Left ventricle myocardium inferior (tissue), 1 donor: ENCODE measurements at regions of chr3 and their contacts with region 1.

Region 1: DNA sequence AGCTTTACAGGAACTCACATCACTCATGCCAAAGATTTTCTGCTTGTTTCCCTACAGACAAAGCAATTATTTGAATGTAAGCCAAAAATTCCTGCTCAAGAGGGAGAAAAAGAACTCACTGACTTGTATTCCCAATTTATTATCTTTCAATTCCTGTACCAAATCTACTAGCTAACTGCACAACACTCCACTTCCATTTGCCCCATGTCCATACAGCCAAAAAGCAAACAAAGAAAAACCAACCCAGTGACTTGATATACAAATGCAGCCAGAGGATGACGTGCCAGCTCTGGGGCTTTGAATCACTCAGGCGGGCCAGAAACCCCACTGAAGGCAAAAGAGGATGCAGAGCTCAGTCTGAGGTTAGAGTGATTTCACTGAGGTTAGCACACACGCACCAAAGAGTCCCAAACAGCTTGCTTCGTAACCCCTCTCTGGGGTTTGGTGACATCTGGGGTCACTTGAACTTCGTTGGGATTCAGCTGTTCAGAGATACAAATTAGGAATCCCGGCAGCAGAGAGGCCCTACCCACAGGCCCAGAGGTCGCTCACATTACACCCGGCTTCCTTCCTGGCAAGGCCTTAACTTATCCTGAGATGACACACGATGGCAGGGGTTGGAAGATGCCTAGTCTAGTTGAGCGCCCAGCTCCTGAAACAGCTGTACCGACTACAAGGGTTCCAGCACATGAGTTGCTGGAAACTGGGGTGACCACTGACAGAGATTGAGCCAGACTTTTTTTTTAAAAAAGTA is 1.6 kb downstream of the RFTN1 start:
- DNase-seq: peak; percentile 62
- H3K4me3 ChIP-seq: peak overlapping the region; percentile 82
- H3K27ac ChIP-seq: peak overlapping the region; percentile 91
- H3K4me1 ChIP-seq: peaks cover 98% of the 10 kb centered on the region
- H3K27me3 ChIP-seq: no peaks in the 10 kb centered on the region
- CTCF ChIP-seq: no peak

Region 2: DNA sequence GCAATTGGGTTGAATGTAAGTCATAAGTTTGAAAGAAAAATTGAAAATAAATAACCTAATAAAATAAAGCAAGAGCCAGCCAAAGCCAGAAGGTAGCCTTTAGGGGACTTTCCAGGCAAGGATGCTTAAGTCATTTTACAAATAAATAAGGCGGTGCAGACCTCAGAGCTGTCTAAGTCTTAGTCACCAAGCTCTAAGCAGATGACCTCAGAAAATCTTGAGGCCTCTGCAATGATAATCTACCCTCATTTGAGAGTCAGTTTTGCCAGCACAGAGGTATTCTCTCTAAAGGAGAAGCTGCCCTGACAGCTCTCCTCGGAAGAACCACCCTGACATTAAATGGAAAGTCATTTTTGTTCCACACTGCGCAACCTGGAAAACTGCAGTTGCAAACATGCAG is 132.9 kb before region 1 on chr3:
- intact Hi-C with region 1: loop called (anchors 10 kb)
- DNase-seq: no peak
- H3K4me3 ChIP-seq: no peak overlapping the region
- H3K27ac ChIP-seq: peak overlapping the region; percentile 86
- H3K4me1 ChIP-seq: peaks cover 64% of the 10 kb centered on the region
- H3K27me3 ChIP-seq: no peaks in the 10 kb centered on the region
- CTCF ChIP-seq: no peak

Region 3: DNA sequence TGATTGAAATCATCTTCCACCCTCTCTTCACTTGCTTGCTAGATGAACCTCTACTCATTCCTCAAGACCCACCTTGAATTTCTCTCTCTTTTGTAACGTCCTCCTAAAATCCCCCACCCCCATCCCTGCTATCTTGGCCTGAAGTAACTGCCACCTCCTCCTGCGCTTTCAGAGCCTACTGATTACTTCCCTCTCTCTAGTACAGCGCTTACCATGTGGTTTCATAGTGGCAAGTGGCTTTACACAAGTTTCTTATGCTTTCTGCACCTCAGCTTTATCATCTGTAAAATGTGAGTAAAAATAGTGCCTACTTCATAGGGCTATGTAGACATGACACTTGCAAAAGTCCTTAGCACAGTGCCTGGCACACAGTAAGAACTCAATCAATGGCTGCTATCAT is 122.1 kb after region 1 on chr3:
- intact Hi-C with region 1: no loop called
- DNase-seq: no peak
- H3K4me3 ChIP-seq: no peak overlapping the region
- H3K27ac ChIP-seq: no peak overlapping the region
- H3K4me1 ChIP-seq: peaks cover 17% of the 10 kb centered on the region
- H3K27me3 ChIP-seq: no peaks in the 10 kb centered on the region
- CTCF ChIP-seq: no peak